ENCODE measurements at regions of chr7 and their contacts with region 1.

Region 1: DNA sequence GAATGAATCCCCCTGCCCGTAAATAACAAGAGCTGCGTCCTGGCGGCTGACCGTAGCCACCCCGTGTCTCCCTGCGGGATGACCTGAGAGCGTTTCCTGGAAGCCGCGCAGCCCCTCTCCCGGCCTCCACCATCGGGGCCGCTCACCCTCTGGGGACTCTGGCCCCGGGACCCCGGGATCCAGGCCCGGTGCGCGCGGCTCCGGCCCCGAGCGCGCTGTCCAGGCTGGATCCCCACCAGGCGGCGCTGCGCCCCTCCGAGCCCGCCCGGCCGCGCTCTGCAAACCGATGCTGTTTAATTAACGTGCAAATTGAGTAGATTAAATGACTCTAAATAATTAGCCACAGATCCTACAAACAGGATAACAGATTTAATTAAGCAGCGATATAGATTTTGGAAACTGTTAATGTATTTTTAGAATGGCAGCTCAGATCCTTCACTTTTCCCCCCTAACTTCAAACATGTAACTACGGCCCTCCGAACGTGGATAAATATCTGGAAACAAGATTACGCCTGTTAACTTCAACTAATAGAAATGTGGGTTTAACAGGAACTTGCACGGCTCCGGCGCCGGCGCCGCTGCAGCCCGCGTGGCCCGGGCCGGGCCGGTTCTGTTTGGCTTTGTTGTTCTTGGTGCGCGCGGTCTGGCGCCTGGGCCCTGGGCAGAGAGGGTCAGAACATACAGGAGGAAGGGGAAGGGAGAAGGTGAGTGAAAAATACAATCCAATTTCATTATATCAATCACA is 7.1 kb upstream of the UNCX start:
- DNase-seq: no peak
- ATAC-seq: peak; percentile 61; the same call in 2 of the 3 replicates
- H3K4me3 ChIP-seq: no peak overlapping the region
- H3K27ac ChIP-seq: no peak overlapping the region
- H3K4me1 ChIP-seq: no peaks in the 10 kb centered on the region
- H3K27me3 ChIP-seq: no peaks in the 10 kb centered on the region; a peak in 3 of 4 replicates
- CTCF ChIP-seq: peak; percentile 56 to 60 (median 59)
- EP300 ChIP-seq: no peak
- POLR2A ChIP-seq: no peak
- RAD21 ChIP-seq: peak; percentile 60

Region 2: GRCh38 chr7:1412322-1413261 is 187.0 kb after region 1 on chr7:
- CTCF ChIA-PET with region 1: no interaction called
- POLR2A ChIA-PET with region 1: no interaction called
- RAD21 ChIA-PET with region 1: no interaction called
- SMC1A ChIA-PET with region 1: no interaction called
- in situ Hi-C with region 1: no loop called
- intact Hi-C with region 1: loop called (anchors 5 kb)
- DNase-seq: no peak
- ATAC-seq: peak; percentile 93
- H3K4me3 ChIP-seq: no peak overlapping the region
- H3K27ac ChIP-seq: no peak overlapping the region
- H3K4me1 ChIP-seq: peaks cover 6% of the 10 kb centered on the region
- H3K27me3 ChIP-seq: no peaks in the 10 kb centered on the region
- CTCF ChIP-seq: peak; percentile 64 to 77 (median 70)
- EP300 ChIP-seq: no peak
- POLR2A ChIP-seq: no peak
- RAD21 ChIP-seq: peak; percentile 61

Region 3: GRCh38 chr7:1432411-1433082 is 206.9 kb after region 1 on chr7:
- CTCF ChIA-PET with region 1: no interaction called
- POLR2A ChIA-PET with region 1: no interaction called
- RAD21 ChIA-PET with region 1: interaction called, 5 read pairs
- SMC1A ChIA-PET with region 1: no interaction called
- in situ Hi-C with region 1: loop called (anchors 5 kb)
- intact Hi-C with region 1: loop called (anchors 1 kb)
- DNase-seq: no peak
- ATAC-seq: peak; percentile 94
- H3K4me3 ChIP-seq: no peak overlapping the region
- H3K27ac ChIP-seq: no peak overlapping the region
- H3K4me1 ChIP-seq: no peaks in the 10 kb centered on the region
- H3K27me3 ChIP-seq: no peaks in the 10 kb centered on the region; a peak in 1 of 4 replicates
- CTCF ChIP-seq: peak; percentile 92 to 97 (median 97)
- EP300 ChIP-seq: no peak
- POLR2A ChIP-seq: no peak
- RAD21 ChIP-seq: peak; percentile 88

Measured in GM12878 (cell line).